Left lung (tissue), 14 donors: ENCODE measurements at regions of chr11 and their contacts with region 1.

Region 1: DNA sequence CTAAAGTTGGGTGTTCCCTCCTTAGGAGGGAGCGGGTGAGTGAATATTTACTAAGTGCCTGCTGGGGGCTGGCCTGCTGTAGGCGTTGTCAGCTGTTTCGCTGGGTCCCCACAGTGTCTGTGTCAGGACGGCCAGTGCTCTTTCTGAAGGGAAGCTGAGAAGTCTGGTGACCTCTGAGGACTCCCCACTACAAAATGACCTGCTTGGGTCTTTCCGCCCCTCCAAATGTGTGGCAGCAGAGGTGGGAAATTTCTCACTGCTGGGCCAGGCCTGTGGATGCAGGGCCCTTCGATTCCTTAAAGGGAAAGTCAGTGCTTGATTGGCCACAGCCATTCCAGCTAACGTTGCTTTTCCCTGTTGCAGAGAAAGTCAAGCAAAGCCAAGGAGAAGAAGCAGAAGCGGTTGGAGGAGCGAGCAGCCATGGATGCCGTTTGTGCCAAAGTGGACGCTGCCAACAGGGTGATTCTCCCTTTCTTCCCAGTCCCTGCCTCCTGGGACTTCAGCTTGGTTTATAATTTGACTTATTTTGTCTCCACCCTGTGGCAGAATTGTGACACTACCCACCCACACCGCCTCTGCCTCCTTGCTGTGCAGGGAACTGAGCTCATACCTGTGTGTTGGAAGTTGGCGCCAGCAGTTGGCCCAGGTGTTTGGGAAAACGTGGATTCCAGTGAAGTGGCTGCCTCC is 6.8 kb downstream of the NAA40 start:
- DNase-seq: peak in 3 of 4 donors; percentile 50 to 85 (median 70)
- ATAC-seq: peak; percentile 98
- H3K4me3 ChIP-seq: no peak overlapping the region
- H3K27ac ChIP-seq: no peak overlapping the region
- H3K4me1 ChIP-seq: peaks cover 9 to 12% of the 10 kb centered on the region in 2 donors
- H3K27me3 ChIP-seq: no peaks in the 10 kb centered on the region
- CTCF ChIP-seq: peak; percentile 64 to 87

Region 2: DNA sequence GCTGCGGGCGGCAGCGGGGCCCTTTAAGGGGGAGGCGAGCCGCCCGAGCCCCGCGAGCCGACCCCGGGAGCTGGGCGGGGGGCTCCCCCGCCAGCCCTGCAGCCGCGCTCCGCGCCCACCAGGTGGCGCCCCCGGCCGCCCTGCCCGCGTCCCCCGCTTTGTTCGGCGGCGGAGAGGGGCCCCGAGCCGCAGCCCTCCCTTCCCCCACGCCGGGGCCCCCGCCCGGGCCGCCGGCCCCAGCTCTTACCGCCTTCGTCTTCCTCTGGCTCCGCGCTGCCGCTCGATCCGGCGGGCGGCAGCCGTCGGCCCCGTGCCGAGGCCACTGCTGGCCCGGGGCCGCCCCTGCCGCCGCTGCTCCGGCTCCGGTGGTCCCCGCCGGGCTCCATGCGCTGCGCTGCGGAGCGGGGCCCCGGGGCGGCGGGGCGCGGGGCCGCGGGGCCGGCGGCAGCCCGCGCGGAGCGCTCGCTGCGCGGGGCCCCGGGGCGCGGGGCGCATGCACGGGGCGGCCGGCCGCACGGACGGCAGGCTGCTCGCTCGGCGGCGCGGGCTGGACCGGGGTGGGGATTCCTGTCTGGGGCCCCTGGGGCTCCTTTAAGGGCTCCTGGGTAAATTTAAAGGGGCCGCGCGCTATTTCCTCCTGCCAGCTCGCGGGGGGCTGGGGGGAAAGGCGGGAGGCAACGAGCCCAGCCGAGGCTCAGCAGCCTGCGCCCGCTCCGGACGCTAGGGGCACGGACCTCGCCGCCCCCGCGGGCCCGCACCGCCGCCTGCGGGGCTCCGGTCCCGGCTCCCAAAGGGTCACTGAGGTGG is 177.2 kb before region 1 on chr11 and contains the start of gene ZFTA:
- intact Hi-C with region 1: loop called in 1 of 2 experiments (anchors 10 kb)
- DNase-seq: peak; percentile 67 to 90 (median 72)
- ATAC-seq: peak; percentile 59
- H3K4me3 ChIP-seq: peak within 1 kb of the TSS; percentile 79 to 82
- H3K27ac ChIP-seq: peak within 1 kb of the TSS; percentile 72 to 74
- H3K4me1 ChIP-seq: peaks cover 4 to 36% of the 10 kb centered on the region in 2 donors
- H3K27me3 ChIP-seq: peaks cover 0 to 31% of the 10 kb centered on the region in 2 donors
- CTCF ChIP-seq: peak; percentile 60 to 63
- polyA plus RNA-seq, gene ZFTA: 28.7 to 40.0 (median 36.3) TPM

Region 3: DNA sequence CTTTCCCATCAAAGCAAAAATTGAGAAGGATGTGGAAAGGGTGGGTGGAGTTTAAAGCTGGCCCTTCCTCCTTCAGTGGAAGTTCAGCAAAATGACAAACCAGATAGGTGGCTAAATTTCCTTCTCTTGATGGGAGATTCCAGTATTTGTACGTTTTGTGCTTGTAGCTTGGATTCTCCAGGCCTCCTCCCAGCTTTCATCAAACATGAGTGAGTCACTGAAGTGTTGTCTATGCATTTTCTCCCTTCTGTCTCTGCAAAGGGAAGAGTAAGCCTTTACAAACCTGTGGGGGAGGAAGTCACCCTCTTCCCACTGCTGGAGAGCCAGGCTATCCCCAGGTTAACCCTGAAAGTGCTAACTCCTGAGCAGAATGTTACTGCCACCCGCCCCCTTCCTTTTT is 100.3 kb before region 1 on chr11:
- intact Hi-C with region 1: no loop called
- DNase-seq: no peak
- ATAC-seq: no peak
- H3K4me3 ChIP-seq: no peak overlapping the region
- H3K27ac ChIP-seq: peak overlapping the region in 1 of 2 donors; percentile 75
- H3K4me1 ChIP-seq: peaks cover 32 to 97% of the 10 kb centered on the region in 2 donors
- H3K27me3 ChIP-seq: no peaks in the 10 kb centered on the region
- CTCF ChIP-seq: no peak

Region 4: DNA sequence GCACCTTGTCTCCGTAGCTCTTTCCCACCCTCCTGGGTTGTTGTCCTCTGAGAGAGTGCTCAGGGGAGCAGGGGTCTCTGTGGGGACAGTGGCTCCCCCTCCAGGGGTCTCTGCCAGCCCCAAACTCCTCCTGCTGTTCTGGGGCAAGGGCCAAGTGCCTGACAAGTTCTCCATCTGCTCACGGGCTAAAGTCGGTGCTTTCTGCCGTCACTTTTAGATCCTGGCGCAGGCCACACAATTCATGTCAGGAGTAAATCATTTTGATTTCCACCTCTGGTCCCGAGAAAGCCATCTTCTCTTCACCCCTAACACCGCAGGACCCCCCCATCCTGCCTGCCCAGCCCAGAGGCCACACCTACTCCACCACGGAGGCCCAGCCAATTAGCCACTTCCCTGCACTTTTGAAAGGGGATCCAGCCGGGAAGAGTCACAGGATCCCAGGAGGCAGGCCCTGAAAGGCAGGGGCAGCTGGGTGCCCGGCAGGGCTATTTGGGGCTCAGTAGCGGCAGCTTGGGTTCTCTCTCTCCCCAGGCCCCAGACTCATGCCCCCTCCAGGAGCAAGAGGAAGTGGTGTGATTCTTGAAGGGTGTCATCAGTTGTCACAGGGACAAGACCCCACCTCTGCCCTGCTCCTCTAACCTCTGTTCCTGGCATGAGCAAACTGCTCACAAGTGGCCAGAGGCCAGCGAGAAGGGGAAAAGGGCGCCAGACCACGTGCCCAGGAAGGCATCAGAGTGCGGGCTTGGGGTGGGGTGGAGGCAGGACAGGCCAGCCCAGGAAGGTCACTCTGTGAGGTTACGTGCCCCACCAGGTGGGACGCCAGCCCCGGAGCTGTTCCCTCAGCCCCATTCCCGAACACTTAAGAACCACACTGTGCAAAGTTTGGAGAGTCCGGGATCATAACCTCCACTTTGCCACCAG is 219.0 kb after region 1 on chr11:
- intact Hi-C with region 1: no loop called
- DNase-seq: peak in 1 of 4 donors; percentile 60
- ATAC-seq: peak; percentile 10
- H3K4me3 ChIP-seq: peak overlapping the region; percentile 74 to 81
- H3K27ac ChIP-seq: no peak overlapping the region
- H3K4me1 ChIP-seq: peaks cover 9 to 29% of the 10 kb centered on the region in 2 donors
- H3K27me3 ChIP-seq: peaks cover 0 to 18% of the 10 kb centered on the region in 2 donors
- CTCF ChIP-seq: no peak